ENCODE measurements at regions of chr12 and their contacts with region 1.

Region 1: GRCh38 chr12:127429551-127430285 is 837.3 kb upstream of the TMEM132C start:
- DNase-seq: no peak
- ATAC-seq: no peak
- H3K4me3 Mint-ChIP-seq: no peak overlapping the region
- H3K27ac Mint-ChIP-seq: no peak overlapping the region
- H3K4me1 Mint-ChIP-seq: no peaks in the 10 kb centered on the region
- H3K27me3 Mint-ChIP-seq: peaks cover 4% of the 10 kb centered on the region

Region 2: GRCh38 chr12:127214186-127214585 is 215.5 kb before region 1 on chr12:
- CTCF ChIA-PET with region 1: no interaction called
- POLR2A ChIA-PET with region 1: no interaction called
- intact Hi-C with region 1: no loop called
- DNase-seq: no peak
- ATAC-seq: no peak
- H3K4me3 Mint-ChIP-seq: no peak overlapping the region
- H3K27ac Mint-ChIP-seq: no peak overlapping the region
- H3K4me1 Mint-ChIP-seq: no peaks in the 10 kb centered on the region
- H3K27me3 Mint-ChIP-seq: no peaks in the 10 kb centered on the region

Region 3: DNA sequence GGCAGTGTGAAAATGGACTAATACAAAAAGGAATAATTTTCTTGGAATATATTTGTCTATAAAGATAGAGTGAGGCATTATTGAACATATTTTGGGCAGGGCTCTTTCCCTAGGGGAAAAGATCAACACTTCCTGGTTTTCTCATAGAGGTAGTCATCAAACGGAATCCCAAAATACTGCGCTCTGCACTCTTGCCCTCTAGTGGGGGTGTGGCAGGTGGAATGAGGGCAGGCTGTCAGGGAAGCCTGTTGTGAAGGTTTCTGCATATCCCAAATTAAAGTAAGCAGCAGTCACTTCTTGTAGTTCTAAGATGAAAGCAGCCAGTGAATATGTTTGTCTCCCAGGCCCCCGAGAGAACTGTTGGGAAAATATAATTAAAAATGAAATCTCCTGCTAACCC is 170.5 kb after region 1 on chr12:
- CTCF ChIA-PET with region 1: no interaction called
- POLR2A ChIA-PET with region 1: no interaction called
- intact Hi-C with region 1: loop called in 1 of 2 experiments (anchors 5 kb)
- DNase-seq: no peak
- ATAC-seq: no peak
- H3K4me3 Mint-ChIP-seq: no peak overlapping the region
- H3K27ac Mint-ChIP-seq: no peak overlapping the region
- H3K4me1 Mint-ChIP-seq: no peaks in the 10 kb centered on the region
- H3K27me3 Mint-ChIP-seq: no peaks in the 10 kb centered on the region